Posterior cingulate gyrus (tissue), 11 donors: ENCODE measurements at regions of chr9 and their contacts with region 1.

Region 1: GRCh38 chr9:71768388-71769174 is at the start of gene CEMIP2:
- DNase-seq: peak; percentile 78 to 98 (median 88)

Region 2: GRCh38 chr9:71249729-71250317 is 518.8 kb before region 1 on chr9:
- intact Hi-C with region 1: no loop called
- DNase-seq: peak in 2 of 10 donors; percentile 4 to 10

Region 3: DNA sequence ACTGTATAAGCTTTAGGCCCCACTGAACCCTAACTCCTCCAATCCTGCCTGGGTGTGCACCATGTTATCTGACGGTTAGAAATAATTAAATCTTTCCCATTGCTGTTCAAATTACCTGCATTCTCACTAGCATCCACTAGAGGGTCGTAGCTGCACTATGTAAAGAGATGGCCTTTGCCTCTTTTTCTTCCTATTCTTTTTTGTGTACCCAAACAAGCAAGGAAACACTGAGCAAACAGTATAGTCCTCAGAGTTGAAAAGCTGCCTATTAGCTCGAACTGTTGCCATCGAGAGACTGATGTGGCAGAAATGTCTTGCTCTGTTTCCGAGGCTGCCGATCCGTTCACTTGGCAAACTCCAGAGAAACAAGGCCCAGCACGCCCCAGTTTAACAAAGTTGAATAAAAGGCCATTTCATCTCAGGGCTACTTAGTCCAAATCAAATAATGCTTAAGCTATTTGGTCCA is 483.4 kb before region 1 on chr9:
- intact Hi-C with region 1: loop called (anchors 2 kb)
- DNase-seq: peak in 8 of 10 donors; percentile 11 to 60 (median 36)

Region 4: GRCh38 chr9:71604197-71605063 is 164.2 kb before region 1 on chr9:
- intact Hi-C with region 1: loop called (anchors 1 kb)
- DNase-seq: peak in 9 of 10 donors; percentile 31 to 93 (median 70)

Region 5: GRCh38 chr9:71830929-71831328 is 62.3 kb after region 1 on chr9:
- intact Hi-C with region 1: no loop called
- DNase-seq: no peak